GM13976 (cell line): ENCODE measurements at regions of chrX and their contacts with region 1.

Region 1: DNA sequence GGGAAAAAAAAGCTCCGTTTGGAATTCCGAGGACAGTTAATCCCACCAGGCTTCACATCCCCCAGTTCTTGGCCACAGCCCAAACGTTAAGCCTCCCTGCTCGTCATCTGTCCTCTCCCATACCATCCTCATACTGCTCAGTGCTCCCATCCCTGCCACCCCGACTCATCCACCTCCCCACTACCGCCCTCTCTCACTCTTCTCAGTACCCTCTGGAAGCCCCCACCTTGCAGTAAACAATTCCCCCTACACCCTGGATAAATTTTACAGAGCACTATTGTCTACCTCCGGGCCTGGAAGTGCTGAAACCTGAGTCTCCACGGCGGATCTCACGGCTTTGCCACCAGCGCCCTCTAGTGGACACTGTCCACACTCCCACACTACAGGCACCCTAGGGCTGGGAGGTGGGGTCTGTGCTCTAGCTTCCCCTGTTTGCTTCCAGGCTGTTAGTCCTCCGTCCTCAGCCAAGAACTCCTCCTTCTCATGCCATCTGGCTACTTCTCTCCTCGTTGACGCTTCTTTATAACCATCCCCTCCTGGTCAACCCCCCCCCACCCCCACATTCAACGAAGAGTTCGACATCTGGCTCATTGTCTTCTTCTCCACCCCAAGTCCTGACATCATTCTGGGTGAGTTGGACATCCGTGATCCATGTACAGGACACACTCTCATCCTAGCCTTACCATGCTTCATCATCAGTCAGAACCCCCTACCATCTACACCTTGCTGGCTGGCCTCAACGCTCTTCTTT is 54.5 kb downstream of the RTL9 start:
- DNase-seq: peak; percentile 59
- CTCF ChIP-seq: peak; percentile 71

Region 2: DNA sequence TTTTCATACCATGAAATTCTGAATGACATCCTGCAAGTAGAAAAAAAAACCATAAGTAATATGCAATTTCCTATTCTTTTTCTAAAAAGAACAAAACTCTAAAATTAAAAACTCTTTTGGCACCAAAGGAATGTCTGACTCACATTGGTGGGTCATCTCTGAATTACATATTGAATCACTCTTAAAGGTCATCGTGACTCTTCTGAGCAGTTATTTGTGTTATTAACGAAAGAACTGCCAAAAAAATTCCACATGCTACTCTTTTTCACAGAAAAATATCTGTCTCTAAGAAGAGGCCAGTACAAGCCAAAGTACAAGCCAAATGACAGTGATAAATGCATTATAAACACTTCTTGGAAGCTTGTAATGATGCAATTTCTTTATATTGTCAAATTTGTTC is 1213.4 kb before region 1 on chrX:
- in situ Hi-C with region 1: no loop called
- DNase-seq: no peak
- CTCF ChIP-seq: no peak

Region 3: GRCh38 chrX:109911046-109911445 is 502.1 kb before region 1 on chrX:
- in situ Hi-C with region 1: loop called (anchors 25 kb)
- DNase-seq: no peak
- CTCF ChIP-seq: peak; percentile 22